AG04449 (cell line): ENCODE measurements at regions of chr17 and their contacts with region 1.

Region 1: GRCh38 chr17:31373150-31374093 is 18.1 kb upstream of the RAB11FIP4 start:
- DNase-seq: peak; percentile 7
- H3K4me3 ChIP-seq: no peak overlapping the region
- CTCF ChIP-seq: peak; percentile 59

Region 2: GRCh38 chr17:31248986-31249834 is 124.2 kb before region 1 on chr17:
- CTCF ChIA-PET with region 1: interaction called, 16 read pairs
- POLR2A ChIA-PET with region 1: no interaction called
- DNase-seq: peak; percentile 56
- H3K4me3 ChIP-seq: no peak overlapping the region
- CTCF ChIP-seq: no peak

Region 3: GRCh38 chr17:31256936-31257335 is 116.5 kb before region 1 on chr17:
- CTCF ChIA-PET with region 1: interaction called, 13 read pairs
- POLR2A ChIA-PET with region 1: no interaction called
- DNase-seq: no peak
- H3K4me3 ChIP-seq: no peak overlapping the region
- CTCF ChIP-seq: no peak

Region 4: GRCh38 chr17:31357091-31357490 is 16.3 kb before region 1 on chr17:
- CTCF ChIA-PET with region 1: interaction called, 10 read pairs
- POLR2A ChIA-PET with region 1: no interaction called
- DNase-seq: no peak
- H3K4me3 ChIP-seq: no peak overlapping the region
- CTCF ChIP-seq: no peak

Region 5: GRCh38 chr17:31388770-31389661 is 15.6 kb after region 1 on chr17:
- CTCF ChIA-PET with region 1: interaction called, 27 read pairs
- POLR2A ChIA-PET with region 1: no interaction called
- DNase-seq: no peak
- H3K4me3 ChIP-seq: no peak overlapping the region
- CTCF ChIP-seq: peak; percentile 77